ENCODE measurements at regions of chr20 and their contacts with region 1.

Region 1: DNA sequence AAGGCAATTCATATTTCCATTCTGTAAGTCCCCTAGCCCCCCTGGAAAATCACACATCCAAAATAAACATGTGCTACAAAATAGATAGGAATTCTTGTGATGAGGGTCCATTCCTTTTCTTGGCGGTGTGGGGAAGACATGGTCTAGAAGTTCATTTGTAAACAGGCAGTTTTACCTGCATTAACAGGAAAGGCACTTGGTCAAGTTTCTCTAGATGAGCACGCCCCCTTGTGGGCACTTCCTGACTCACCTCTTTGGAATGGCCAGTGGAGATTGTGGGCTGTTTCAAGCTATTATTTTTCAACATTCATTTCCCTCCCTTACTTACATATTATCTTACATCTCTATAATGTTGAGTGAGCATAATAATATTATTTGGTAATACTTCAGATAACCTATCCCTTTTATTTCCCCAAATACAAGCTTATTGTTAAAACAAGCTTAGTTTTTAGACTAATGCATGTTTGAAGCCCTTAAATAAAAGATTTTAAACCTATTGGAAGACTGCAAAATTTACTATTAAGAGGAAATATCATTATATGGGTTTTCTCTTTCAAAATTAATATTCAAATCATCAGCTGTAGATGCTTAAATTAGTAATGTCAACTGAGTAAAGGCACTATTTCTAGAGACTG is 92.1 kb downstream of the TASP1 start:
- DNase-seq: peak; percentile 39 to 93
- H3K4me3 ChIP-seq: no peak overlapping the region
- H3K27ac ChIP-seq: no peak overlapping the region
- H3K4me1 ChIP-seq: no peaks in the 10 kb centered on the region
- H3K27me3 ChIP-seq: no peaks in the 10 kb centered on the region
- CTCF ChIP-seq: peak; percentile 63 to 84 (median 81)
- EP300 ChIP-seq: no peak
- POLR2A ChIP-seq: no peak
- RAD21 ChIP-seq: peak; percentile 93

Region 2: DNA sequence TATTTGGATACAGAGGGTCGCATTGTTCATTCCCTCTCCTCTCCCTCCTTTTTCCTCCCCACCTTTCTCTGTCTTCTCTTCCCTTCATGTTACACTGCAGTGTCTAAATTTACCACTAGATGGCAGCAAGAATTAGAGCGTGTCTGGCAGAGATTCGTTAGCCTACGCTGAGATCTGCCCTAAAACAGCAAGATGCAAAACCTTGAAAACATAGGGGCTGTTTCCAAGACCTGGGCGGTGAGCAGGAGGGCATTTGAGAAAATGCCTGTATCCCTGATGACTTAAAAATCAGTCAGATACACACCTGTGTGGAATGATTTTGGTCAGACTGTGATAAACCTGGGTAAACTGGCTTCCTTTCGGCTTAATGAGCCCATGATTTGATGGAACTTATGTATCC is 427.0 kb before region 1 on chr20:
- CTCF ChIA-PET with region 1: interaction called, 12 read pairs
- POLR2A ChIA-PET with region 1: no interaction called
- DNase-seq: peak in 1 of 2 experiments; percentile 15
- H3K4me3 ChIP-seq: no peak overlapping the region
- H3K27ac ChIP-seq: no peak overlapping the region
- H3K4me1 ChIP-seq: no peaks in the 10 kb centered on the region; a peak in 1 of 7 replicates
- H3K27me3 ChIP-seq: no peaks in the 10 kb centered on the region
- CTCF ChIP-seq: peak in 2 of 3 experiments; percentile 86 to 89; a peak in 3 of 4 replicates
- EP300 ChIP-seq: no peak
- POLR2A ChIP-seq: no peak
- RAD21 ChIP-seq: peak; percentile 92 to 94

Region 3: DNA sequence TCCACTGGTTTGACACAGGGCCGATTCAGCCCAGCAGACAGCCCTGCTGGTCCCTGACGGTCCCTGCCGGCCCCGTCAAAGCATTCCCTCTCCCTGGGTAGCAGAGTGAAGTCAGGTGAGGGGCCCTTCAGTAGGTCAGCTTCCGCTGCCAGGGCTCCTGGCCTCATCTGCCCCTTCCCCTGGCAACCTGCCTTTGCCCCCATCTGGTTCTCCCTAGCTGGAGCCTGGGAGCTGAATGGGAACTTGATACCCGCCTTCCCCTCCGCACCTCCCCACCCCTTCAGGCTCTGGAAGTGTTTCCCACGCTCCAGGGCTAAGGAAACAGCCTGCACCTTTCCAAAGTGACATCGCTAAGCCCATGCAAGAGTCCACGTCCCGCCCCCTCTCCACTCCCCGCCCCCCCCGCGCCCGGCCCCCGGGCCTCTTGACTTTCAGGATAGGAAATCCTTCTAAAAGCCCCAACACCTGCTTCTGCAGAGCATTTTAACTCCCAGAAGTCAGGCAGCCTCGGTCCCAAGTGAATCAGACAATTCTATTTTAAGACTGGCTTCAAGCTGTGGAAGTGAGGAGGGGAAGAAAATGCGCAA is 272.2 kb before region 1 on chr20:
- CTCF ChIA-PET with region 1: interaction called, 10 read pairs
- POLR2A ChIA-PET with region 1: no interaction called
- DNase-seq: peak; percentile 19 to 70
- H3K4me3 ChIP-seq: peak overlapping the region in 1 of 4 experiments; percentile 36; a peak in 2 of 8 replicates
- H3K27ac ChIP-seq: no peak overlapping the region
- H3K4me1 ChIP-seq: peaks cover 2 to 6% (median 3%) of the 10 kb centered on the region in 4 experiments; a peak in 3 of 7 replicates
- H3K27me3 ChIP-seq: no peaks in the 10 kb centered on the region; a peak in 1 of 7 replicates
- CTCF ChIP-seq: no peak
- EP300 ChIP-seq: no peak
- POLR2A ChIP-seq: no peak
- RAD21 ChIP-seq: no peak

Region 4: DNA sequence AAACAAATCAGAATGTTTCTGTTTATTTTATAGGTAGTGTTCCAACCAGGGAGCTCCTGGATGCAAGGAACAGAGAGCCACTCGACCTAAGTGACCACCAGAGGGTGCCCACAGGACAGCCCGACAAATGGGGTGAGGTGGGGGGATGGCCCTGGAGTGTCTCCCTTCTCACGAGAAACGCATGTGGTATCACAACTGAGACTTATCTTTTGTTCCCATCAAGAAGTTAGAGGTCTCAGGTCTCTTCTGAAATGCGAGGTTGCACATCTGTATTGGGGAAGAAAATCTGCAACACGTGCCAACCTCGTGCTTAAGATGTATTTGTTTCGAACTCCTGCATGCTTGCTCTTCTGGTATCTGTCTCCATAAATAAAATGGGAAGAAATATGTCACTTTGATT is 221.6 kb before region 1 on chr20:
- CTCF ChIA-PET with region 1: interaction called, 120 read pairs
- POLR2A ChIA-PET with region 1: no interaction called
- DNase-seq: peak; percentile 46 to 74
- H3K4me3 ChIP-seq: no peak overlapping the region
- H3K27ac ChIP-seq: no peak overlapping the region
- H3K4me1 ChIP-seq: peaks cover 0 to 5% (median 0%) of the 10 kb centered on the region in 4 experiments; a peak in 1 of 7 replicates
- H3K27me3 ChIP-seq: peaks cover 0 to 1% (median 0%) of the 10 kb centered on the region in 4 experiments; a peak in 1 of 7 replicates
- CTCF ChIP-seq: peak; percentile 81 to 85 (median 81)
- EP300 ChIP-seq: no peak
- POLR2A ChIP-seq: no peak
- RAD21 ChIP-seq: peak; percentile 89 to 92

Region 5: GRCh38 chr20:13341781-13342277 is 204.8 kb before region 1 on chr20:
- CTCF ChIA-PET with region 1: interaction called, 10 read pairs
- POLR2A ChIA-PET with region 1: no interaction called
- DNase-seq: no peak
- H3K4me3 ChIP-seq: no peak overlapping the region
- H3K27ac ChIP-seq: no peak overlapping the region
- H3K4me1 ChIP-seq: no peaks in the 10 kb centered on the region; a peak in 2 of 7 replicates
- H3K27me3 ChIP-seq: no peaks in the 10 kb centered on the region
- CTCF ChIP-seq: no peak
- EP300 ChIP-seq: no peak
- POLR2A ChIP-seq: no peak
- RAD21 ChIP-seq: no peak

Region 6: DNA sequence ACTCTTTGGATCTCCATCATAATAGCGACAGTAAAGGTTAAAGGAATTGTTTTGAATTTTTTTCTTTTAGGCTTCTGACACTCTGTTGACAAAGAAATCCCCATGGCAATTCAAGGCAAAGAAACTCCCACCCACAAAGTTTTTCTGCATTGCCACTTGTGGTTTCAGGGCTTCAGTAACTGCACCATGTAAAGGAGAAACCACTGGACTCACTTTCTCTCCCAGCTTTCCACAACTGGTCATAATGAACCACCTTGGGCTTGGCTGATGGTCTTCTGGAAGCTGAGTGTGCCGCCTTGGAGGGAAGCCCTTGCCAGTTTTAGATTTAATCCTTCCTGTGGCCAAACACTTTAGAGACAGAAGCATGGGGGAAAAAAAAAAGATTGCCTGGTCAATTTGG is 162.5 kb before region 1 on chr20:
- CTCF ChIA-PET with region 1: no interaction called
- POLR2A ChIA-PET with region 1: no interaction called
- DNase-seq: no peak
- H3K4me3 ChIP-seq: no peak overlapping the region
- H3K27ac ChIP-seq: no peak overlapping the region
- H3K4me1 ChIP-seq: no peaks in the 10 kb centered on the region
- H3K27me3 ChIP-seq: no peaks in the 10 kb centered on the region
- CTCF ChIP-seq: no peak
- EP300 ChIP-seq: no peak
- POLR2A ChIP-seq: no peak
- RAD21 ChIP-seq: no peak

Region 7: DNA sequence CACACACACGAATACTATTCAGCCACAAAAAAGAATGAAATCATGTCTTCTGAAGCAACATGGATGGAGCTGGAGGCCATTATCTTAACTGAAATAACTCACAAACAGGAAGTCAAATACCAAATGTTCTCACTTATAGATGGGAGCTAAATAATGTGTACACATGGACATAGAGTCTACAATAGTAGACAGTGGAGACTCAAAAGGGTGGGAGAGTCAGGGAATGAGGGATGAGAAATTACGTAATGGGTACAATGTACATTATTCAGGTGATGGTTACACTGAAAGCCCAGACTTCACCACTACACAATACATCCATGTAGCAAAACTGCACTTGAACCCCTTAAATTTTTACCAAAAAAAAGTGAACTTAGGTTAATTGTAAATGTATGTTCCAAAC is 68.2 kb before region 1 on chr20:
- CTCF ChIA-PET with region 1: no interaction called
- POLR2A ChIA-PET with region 1: no interaction called
- DNase-seq: no peak
- H3K4me3 ChIP-seq: no peak overlapping the region
- H3K27ac ChIP-seq: no peak overlapping the region
- H3K4me1 ChIP-seq: no peaks in the 10 kb centered on the region
- H3K27me3 ChIP-seq: no peaks in the 10 kb centered on the region
- CTCF ChIP-seq: no peak
- EP300 ChIP-seq: no peak
- POLR2A ChIP-seq: no peak
- RAD21 ChIP-seq: no peak

Region 8: GRCh38 chr20:13533946-13534345 is 12.7 kb before region 1 on chr20:
- CTCF ChIA-PET with region 1: interaction called, 43 read pairs
- POLR2A ChIA-PET with region 1: no interaction called
- DNase-seq: no peak
- H3K4me3 ChIP-seq: no peak overlapping the region
- H3K27ac ChIP-seq: no peak overlapping the region
- H3K4me1 ChIP-seq: peaks cover 0 to 2% (median 0%) of the 10 kb centered on the region in 4 experiments; a peak in 2 of 7 replicates
- H3K27me3 ChIP-seq: no peaks in the 10 kb centered on the region
- CTCF ChIP-seq: no peak
- EP300 ChIP-seq: no peak
- POLR2A ChIP-seq: no peak
- RAD21 ChIP-seq: no peak

Region 9: GRCh38 chr20:13625304-13625979 is 78.8 kb after region 1 on chr20:
- CTCF ChIA-PET with region 1: no interaction called
- POLR2A ChIA-PET with region 1: no interaction called
- DNase-seq: no peak
- H3K4me3 ChIP-seq: no peak overlapping the region
- H3K27ac ChIP-seq: no peak overlapping the region
- H3K4me1 ChIP-seq: peaks cover 3 to 23% (median 9%) of the 10 kb centered on the region in 4 experiments
- H3K27me3 ChIP-seq: no peaks in the 10 kb centered on the region
- CTCF ChIP-seq: no peak
- EP300 ChIP-seq: no peak
- POLR2A ChIP-seq: no peak
- RAD21 ChIP-seq: no peak

Measured in H1 (cell line).